Dendritic cell treated with granulocyte-macrophage colony-stimulating factor and Interleukin-4, amounts not matched to agents 40 ng/mL and 50 ng/mL, for 4 days (primary cell): ENCODE measurements at regions of chr22 and their contacts with region 1.

Region 1: GRCh38 chr22:49936018-49936952 is 17.9 kb downstream of the CRELD2 start:
- H3K4me3 Mint-ChIP-seq: peak overlapping the region; percentile 59
- H3K27ac Mint-ChIP-seq: peak overlapping the region; percentile 95
- H3K4me1 Mint-ChIP-seq: peaks cover 74% of the 10 kb centered on the region
- H3K27me3 Mint-ChIP-seq: peaks cover 7% of the 10 kb centered on the region

Region 2: GRCh38 chr22:49807780-49808708 is 128.2 kb before region 1 on chr22:
- intact Hi-C with region 1: no loop called
- H3K4me3 Mint-ChIP-seq: no peak overlapping the region
- H3K27ac Mint-ChIP-seq: peak overlapping the region; percentile 34
- H3K4me1 Mint-ChIP-seq: peaks cover 62% of the 10 kb centered on the region
- H3K27me3 Mint-ChIP-seq: no peaks in the 10 kb centered on the region

Region 3: GRCh38 chr22:49894322-49895054 is 41.8 kb before region 1 on chr22:
- intact Hi-C with region 1: no loop called
- H3K4me3 Mint-ChIP-seq: no peak overlapping the region
- H3K27ac Mint-ChIP-seq: no peak overlapping the region
- H3K4me1 Mint-ChIP-seq: no peaks in the 10 kb centered on the region
- H3K27me3 Mint-ChIP-seq: no peaks in the 10 kb centered on the region

Region 4: GRCh38 chr22:49906071-49906932 is 30.0 kb before region 1 on chr22:
- intact Hi-C with region 1: no loop called
- H3K4me3 Mint-ChIP-seq: no peak overlapping the region
- H3K27ac Mint-ChIP-seq: no peak overlapping the region
- H3K4me1 Mint-ChIP-seq: no peaks in the 10 kb centered on the region
- H3K27me3 Mint-ChIP-seq: no peaks in the 10 kb centered on the region

Region 5: DNA sequence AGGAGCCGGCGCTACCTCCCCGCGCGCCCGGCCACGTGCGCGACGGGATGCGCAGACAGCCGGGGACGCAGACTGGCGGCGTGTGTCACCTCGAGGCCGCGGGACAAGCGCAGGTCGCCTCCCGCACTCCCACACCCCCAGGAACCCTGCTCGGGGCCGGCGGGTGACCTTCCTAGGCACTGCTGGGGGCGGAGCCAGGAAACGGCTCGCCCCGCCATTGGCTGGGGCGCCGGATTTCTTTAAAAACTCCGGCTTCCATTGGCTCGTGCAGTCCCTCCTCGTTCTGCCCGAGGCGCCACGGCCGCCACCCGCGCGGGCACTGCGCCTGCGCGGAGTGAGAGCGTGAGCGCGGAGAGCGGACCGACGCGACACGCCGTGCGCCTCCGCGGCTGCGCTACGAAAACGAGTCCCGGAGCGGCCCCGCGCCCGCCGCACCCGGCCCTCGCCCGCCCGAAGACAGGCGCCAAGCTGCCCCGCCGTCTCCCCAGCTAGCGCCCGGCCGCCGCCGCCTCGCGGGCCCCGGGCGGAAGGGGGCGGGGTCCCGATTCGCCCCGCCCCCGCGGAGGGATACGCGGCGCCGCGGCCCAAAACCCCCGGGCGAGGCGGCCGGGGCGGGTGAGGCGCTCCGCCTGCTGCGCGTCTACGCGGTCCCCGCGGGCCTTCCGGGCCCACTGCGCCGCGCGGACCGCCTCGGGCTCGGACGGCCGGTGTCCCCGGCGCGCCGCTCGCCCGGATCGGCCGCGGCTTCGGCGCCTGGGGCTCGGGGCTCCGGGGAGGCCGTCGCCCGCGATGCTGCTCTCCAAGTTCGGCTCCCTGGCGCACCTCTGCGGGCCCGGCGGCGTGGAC is 24.1 kb after region 1 on chr22 and contains the start of gene PIM3:
- intact Hi-C with region 1: loop called (anchors 1 kb)
- H3K4me3 Mint-ChIP-seq: peak within 1 kb of the TSS; percentile 99
- H3K27ac Mint-ChIP-seq: peak within 1 kb of the TSS; percentile 97
- H3K4me1 Mint-ChIP-seq: peaks cover 67% of the 10 kb centered on the region
- H3K27me3 Mint-ChIP-seq: no peaks in the 10 kb centered on the region

Region 6: DNA sequence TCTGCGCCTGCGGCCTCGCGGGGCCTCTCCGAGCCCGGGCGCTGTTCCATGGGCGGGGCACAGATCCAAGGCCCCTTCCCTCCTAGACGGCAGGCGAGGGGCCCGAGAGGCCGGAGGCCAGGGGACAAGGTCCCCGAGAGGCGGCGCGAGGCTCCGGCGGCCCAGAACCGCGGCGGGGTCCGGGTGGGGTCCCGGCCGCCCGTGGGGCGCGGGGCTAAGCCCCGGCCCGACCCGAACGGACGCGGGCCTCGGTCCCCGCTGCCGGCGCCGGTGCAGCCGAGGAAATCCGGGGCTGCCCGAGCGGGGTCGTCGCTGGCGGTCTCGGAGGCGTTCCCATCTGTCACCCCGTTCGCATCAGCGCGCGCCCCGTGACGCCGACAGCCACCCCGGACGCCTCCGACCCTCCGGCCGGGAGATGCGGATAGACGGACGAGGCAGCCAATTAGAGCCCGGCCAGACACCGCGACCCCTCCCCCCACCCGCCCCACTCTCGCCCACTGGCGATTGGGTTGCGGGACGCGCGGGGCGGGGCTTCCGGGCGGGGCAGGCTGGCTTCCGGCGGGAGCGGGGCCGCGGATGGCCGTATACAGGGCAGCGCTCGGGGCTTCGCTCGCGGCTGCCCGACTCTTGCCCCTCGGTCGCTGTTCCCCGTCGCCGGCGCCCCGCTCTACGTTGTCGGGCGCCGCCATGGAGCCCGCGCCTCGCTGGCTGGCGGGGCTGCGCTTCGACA is 264.3 kb after region 1 on chr22 and contains the start of gene SELENOO:
- intact Hi-C with region 1: loop called (anchors 10 kb)
- H3K4me3 Mint-ChIP-seq: peak within 1 kb of the TSS; percentile 78
- H3K27ac Mint-ChIP-seq: peak within 1 kb of the TSS; percentile 68
- H3K4me1 Mint-ChIP-seq: peaks cover 48% of the 10 kb centered on the region
- H3K27me3 Mint-ChIP-seq: no peaks in the 10 kb centered on the region